Natural killer cell (primary cell): ENCODE measurements at regions of chr4 and their contacts with region 1.

Region 1: DNA sequence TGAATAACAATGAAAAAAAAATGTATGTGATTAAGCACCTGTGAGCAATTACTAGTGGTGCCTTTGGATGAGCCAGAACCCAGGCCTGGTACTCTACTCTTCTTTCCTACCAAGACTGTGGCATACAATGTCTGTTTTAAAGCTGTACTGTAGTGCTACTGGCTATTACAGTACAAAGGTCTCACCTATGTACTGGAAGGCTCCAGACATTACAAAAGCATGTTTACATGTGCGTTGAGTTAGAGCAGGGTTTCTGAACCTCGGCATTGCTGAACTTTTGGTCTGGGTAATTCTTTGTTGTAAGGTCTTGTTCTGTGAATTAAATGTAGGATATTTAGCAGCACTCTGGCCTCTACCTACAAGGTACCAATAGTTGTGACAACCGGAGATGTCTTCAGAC is 153.8 kb downstream of the SPATA18 start:
- DNase-seq: no peak
- ATAC-seq: no peak
- H3K4me3 ChIP-seq: no peak overlapping the region
- H3K4me3 Mint-ChIP-seq: no peak overlapping the region
- H3K27ac ChIP-seq: no peak overlapping the region
- H3K27ac Mint-ChIP-seq: no peak overlapping the region
- H3K4me1 ChIP-seq: no peaks in the 10 kb centered on the region
- H3K4me1 Mint-ChIP-seq: no peaks in the 10 kb centered on the region
- H3K27me3 ChIP-seq: no peaks in the 10 kb centered on the region
- H3K27me3 Mint-ChIP-seq: no peaks in the 10 kb centered on the region
- CTCF ChIP-seq: no peak

Region 2: GRCh38 chr4:52259978-52260377 is 55.1 kb after region 1 on chr4:
- intact Hi-C with region 1: loop called (anchors 5 kb)
- DNase-seq: no peak
- ATAC-seq: no peak
- H3K4me3 ChIP-seq: no peak overlapping the region
- H3K4me3 Mint-ChIP-seq: no peak overlapping the region
- H3K27ac ChIP-seq: no peak overlapping the region
- H3K27ac Mint-ChIP-seq: no peak overlapping the region
- H3K4me1 ChIP-seq: no peaks in the 10 kb centered on the region
- H3K4me1 Mint-ChIP-seq: no peaks in the 10 kb centered on the region
- H3K27me3 ChIP-seq: no peaks in the 10 kb centered on the region
- H3K27me3 Mint-ChIP-seq: no peaks in the 10 kb centered on the region
- CTCF ChIP-seq: no peak